ENCODE measurements at regions of chr6 and their contacts with region 1.

Region 1: GRCh38 chr6:141195251-141195832 is 937.4 kb upstream of the GJE1 start:
- DNase-seq: peak; percentile 30
- ATAC-seq: peak; percentile 100
- H3K4me3 ChIP-seq: no peak overlapping the region
- H3K27ac ChIP-seq: no peak overlapping the region
- H3K4me1 ChIP-seq: no peaks in the 10 kb centered on the region
- H3K27me3 ChIP-seq: no peaks in the 10 kb centered on the region
- CTCF ChIP-seq: peak; percentile 49; the same call in 1 of the 2 replicates
- EP300 ChIP-seq: no peak
- POLR2A ChIP-seq: no peak
- RAD21 ChIP-seq: no peak

Region 2: DNA sequence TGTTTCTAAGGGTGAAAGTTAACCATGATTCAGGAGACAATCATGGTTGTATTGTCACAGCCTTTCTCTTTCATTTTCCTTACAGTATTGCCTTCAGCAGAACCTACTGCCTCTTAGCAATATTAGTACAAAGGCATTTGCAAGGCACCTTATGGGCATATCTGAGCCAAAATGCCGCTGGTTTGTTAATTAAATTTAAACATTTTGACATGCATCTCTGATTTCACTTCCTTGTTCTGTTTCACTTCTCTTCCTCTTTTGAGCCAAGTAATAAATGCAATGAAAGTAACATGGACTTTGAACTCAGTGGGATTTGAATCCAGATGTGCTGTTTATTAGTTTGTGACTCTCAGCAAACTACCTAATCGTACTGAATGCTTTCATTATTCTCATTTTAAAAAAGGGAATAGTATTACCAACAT is 1353.5 kb before region 1 on chr6:
- CTCF ChIA-PET with region 1: no interaction called
- POLR2A ChIA-PET with region 1: no interaction called
- in situ Hi-C with region 1: no loop called
- intact Hi-C with region 1: loop called (anchors 5 kb)
- DNase-seq: no peak
- ATAC-seq: no peak
- H3K4me3 ChIP-seq: no peak overlapping the region
- H3K27ac ChIP-seq: no peak overlapping the region
- H3K4me1 ChIP-seq: no peaks in the 10 kb centered on the region
- H3K27me3 ChIP-seq: no peaks in the 10 kb centered on the region; a peak in 1 of 5 replicates
- CTCF ChIP-seq: no peak
- EP300 ChIP-seq: no peak
- POLR2A ChIP-seq: no peak
- RAD21 ChIP-seq: no peak